ENCODE measurements at regions of chr14 and their contacts with region 1.

Region 1: DNA sequence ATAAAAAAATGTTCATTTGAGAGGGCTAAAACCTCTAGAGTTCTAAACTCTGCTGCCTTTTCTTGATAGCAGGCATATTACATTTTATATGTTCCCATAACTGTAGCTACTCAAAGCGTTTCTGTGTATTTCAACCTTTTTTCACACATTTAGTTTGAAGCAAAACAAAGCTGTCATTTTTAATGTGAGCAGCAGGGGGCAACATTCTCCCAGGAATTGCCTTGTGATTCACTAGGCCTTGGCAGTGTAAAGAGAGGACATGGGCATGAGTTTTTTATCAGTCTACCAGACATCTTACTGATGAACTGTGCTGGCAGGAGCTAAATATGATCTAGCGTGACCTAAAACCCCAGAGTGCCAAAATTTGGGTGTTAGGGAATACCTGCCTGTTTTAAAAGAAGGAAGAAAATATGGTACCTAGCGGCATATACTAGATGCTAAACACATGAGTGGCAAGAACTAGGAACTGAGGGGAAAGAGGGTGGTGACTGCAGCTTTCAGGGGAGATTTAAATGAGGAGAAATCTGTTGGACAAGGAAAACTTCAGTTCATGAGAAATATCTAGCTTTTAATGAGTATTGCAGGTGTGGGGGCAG is 65.3 kb downstream of the IFT43 start:
- DNase-seq: peak; percentile 60
- H3K4me3 ChIP-seq: no peak overlapping the region
- H3K27ac ChIP-seq: no peak overlapping the region
- H3K4me1 ChIP-seq: no peaks in the 10 kb centered on the region
- CTCF ChIP-seq: peak; percentile 95

Region 2: DNA sequence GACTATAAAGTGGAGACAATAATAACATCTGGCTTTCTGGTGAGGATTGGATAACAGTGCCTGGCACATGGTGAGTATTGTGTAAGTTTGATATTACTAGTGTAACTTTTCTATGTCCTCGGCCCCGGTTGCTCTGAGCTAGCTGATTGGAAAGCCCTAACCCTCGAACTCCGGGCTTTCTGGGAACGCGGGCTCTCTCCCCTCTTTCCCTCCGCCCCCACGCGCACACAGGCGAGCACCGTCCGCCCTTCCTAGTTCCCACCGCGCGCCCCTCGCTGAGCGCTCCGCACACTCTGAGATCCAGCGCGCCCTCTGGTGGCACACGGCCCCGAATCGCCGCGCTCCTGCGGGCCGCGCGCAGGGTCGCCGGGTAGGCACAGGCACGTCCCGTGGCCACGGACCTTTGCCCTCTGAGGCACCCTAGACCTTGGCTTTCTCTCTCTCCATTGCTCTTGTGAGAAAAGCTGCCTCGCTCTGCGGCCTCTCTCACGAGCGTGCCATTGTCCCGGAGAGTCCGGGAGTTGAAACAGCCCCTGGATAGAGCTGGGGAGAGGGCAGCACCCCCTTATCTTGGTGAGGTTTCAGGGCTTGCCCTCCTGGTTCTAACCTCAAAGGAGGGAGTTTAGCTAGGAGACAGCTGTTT is 301.9 kb after region 1 on chr14:
- CTCF ChIA-PET with region 1: no interaction called
- POLR2A ChIA-PET with region 1: no interaction called
- intact Hi-C with region 1: loop called (anchors 2 kb)
- DNase-seq: peak; percentile 7
- H3K4me3 ChIP-seq: no peak overlapping the region
- H3K27ac ChIP-seq: no peak overlapping the region
- H3K4me1 ChIP-seq: no peaks in the 10 kb centered on the region
- CTCF ChIP-seq: peak; percentile 73

Region 3: DNA sequence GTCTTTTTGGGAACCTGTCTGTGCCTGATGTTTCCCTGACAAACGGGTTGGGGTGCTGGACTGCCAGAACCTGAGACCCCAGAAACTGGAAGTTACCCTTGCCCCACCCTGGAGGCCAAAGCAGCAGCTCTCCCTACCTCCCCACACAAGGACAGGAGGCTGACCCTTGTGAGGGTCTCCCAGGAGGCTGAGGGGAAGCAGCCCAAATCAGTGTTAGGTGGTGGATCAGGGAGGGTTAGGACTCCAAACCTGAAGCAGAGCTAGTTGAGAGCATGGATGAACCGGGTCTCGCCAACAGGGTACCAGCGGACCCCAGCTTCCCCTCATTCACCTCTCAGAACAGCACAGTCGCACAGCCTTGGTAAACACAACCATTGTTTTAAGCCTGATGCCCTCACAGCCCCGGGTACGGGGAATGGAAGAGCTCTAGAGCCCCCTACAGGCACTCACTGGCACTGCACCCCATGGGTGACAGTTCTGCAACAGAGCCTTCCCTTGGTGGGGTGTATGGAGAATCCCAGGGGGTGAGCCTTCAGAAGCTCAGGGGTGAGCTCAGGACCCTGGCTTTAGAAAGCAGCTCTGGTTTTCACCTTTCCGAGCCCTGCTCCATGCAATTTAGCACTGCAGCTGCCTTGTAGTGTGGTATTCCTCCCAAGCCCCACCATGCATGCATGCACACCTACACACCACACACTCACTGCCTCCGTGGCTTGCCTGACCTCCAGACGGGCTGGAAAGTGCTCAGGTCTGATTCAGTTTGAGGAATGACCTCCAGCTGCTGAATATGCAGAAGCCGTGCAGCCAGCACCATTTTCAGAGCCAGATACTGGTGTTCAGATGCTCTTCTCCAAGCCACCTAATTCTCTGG is 336.3 kb after region 1 on chr14:
- CTCF ChIA-PET with region 1: interaction called, 4 read pairs
- POLR2A ChIA-PET with region 1: no interaction called
- intact Hi-C with region 1: loop called (anchors 1 kb)
- DNase-seq: peak; percentile 70
- H3K4me3 ChIP-seq: no peak overlapping the region
- H3K27ac ChIP-seq: no peak overlapping the region
- H3K4me1 ChIP-seq: no peaks in the 10 kb centered on the region
- CTCF ChIP-seq: peak; percentile 91

Region 4: DNA sequence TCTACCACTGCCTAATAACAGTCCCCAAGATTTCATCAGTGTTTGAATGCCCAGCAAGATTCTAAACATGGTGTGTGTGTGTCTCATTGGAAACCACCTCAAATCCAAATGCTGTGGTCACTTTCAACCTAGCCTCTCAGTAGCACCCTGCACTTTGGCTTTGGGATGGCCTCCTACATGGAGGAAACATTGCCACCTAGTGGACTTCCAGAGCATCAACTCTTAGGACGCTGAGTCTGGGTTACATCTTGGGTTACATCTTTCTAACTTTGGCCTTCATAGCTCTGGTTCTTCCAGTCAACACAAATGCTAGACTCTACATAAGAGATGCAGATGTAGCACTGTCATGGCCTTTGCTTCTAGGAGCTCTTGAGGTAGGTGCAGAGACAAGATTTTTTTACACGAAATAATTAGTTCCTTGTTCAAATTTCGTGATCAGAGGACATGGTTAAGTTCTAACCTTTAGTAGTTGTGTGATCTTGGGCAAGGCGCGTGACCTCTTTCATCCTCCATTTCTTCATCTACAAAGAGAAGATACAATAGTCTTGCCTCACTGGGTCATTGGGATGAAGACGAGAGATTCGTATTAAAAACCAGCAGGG is 596.9 kb after region 1 on chr14:
- CTCF ChIA-PET with region 1: no interaction called
- POLR2A ChIA-PET with region 1: no interaction called
- intact Hi-C with region 1: loop called (anchors 1 kb)
- DNase-seq: peak; percentile 65
- H3K4me3 ChIP-seq: no peak overlapping the region
- H3K27ac ChIP-seq: no peak overlapping the region
- H3K4me1 ChIP-seq: no peaks in the 10 kb centered on the region
- CTCF ChIP-seq: peak; percentile 86